ENCODE measurements at regions of chr22 and their contacts with region 1.

Region 1: GRCh38 chr22:42901790-42902508 is 44.9 kb upstream of the ARFGAP3 start:
- DNase-seq: peak; percentile 50 to 86
- ATAC-seq: peak; percentile 76 to 86 (median 80)
- H3K4me3 ChIP-seq: no peak overlapping the region
- H3K27ac ChIP-seq: peak overlapping the region; percentile 90
- H3K4me1 ChIP-seq: peaks cover 52% of the 10 kb centered on the region
- H3K27me3 ChIP-seq: no peaks in the 10 kb centered on the region
- CTCF ChIP-seq: peak; percentile 14

Region 2: GRCh38 chr22:43014869-43015676 is 113.1 kb after region 1 on chr22 and contains the start of gene PACSIN2:
- intact Hi-C with region 1: loop called in 1 of 2 experiments (anchors 5 kb)
- DNase-seq: peak; percentile 100
- ATAC-seq: peak; percentile 98 to 100 (median 98)
- H3K4me3 ChIP-seq: peak within 1 kb of the TSS; percentile 80
- H3K27ac ChIP-seq: peak within 1 kb of the TSS; percentile 82
- H3K4me1 ChIP-seq: peaks cover 13% of the 10 kb centered on the region
- H3K27me3 ChIP-seq: no peaks in the 10 kb centered on the region
- CTCF ChIP-seq: no peak
- total RNA-seq, gene PACSIN2: 27.9 to 52.2 (median 38.4) TPM

Measured in psoas muscle (tissue), 8 donors.